Naive thymus-derived CD4-positive, alpha-beta T cell (primary cell): ENCODE measurements at regions of chr3 and their contacts with region 1.

Region 1: DNA sequence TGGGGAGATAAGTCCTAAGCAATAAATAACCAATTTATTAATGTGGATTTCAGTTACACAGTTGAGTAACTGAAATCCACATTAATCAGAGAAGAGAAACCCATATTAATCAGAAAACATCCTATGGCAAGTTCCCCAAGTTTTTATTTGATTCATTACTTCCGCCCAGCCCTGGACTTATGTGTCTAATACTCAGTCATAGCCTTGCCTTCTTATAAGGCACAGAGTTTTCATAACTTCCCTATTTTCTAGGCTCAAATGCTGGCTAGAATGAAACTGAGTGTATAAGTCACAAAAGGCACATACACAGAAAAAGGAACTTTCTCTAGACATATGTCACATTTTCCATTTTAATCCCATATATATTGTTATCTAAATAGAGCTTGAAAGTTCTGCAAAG is 28.8 kb downstream of the CD47 start:
- DNase-seq: no peak
- ATAC-seq: peak; percentile 79
- H3K4me3 ChIP-seq: no peak overlapping the region
- H3K4me3 Mint-ChIP-seq: no peak overlapping the region
- H3K27ac ChIP-seq: no peak overlapping the region
- H3K27ac Mint-ChIP-seq: peak overlapping the region in 6 of 9 donors; percentile 12 to 67 (median 38)
- H3K4me1 ChIP-seq: peaks cover 6 to 10% of the 10 kb centered on the region in 2 donors
- H3K4me1 Mint-ChIP-seq: peaks cover 38 to 89% (median 80%) of the 10 kb centered on the region in 7 donors
- H3K27me3 ChIP-seq: no peaks in the 10 kb centered on the region
- H3K27me3 Mint-ChIP-seq: no peaks in the 10 kb centered on the region

Region 2: GRCh38 chr3:108022256-108023097 is 39.6 kb before region 1 on chr3:
- CTCF ChIA-PET with region 1: no interaction called
- POLR2A ChIA-PET with region 1: no interaction called
- intact Hi-C with region 1: no loop called
- DNase-seq: no peak
- ATAC-seq: no peak
- H3K4me3 ChIP-seq: no peak overlapping the region
- H3K4me3 Mint-ChIP-seq: no peak overlapping the region
- H3K27ac ChIP-seq: no peak overlapping the region
- H3K27ac Mint-ChIP-seq: peak overlapping the region in 1 of 9 donors; percentile 42
- H3K4me1 ChIP-seq: no peaks in the 10 kb centered on the region
- H3K4me1 Mint-ChIP-seq: peaks cover 2 to 16% (median 8%) of the 10 kb centered on the region in 7 donors
- H3K27me3 ChIP-seq: no peaks in the 10 kb centered on the region
- H3K27me3 Mint-ChIP-seq: peaks cover 0 to 11% (median 9%) of the 10 kb centered on the region in 5 donors

Region 3: GRCh38 chr3:108047987-108048386 is 14.1 kb before region 1 on chr3:
- CTCF ChIA-PET with region 1: no interaction called
- POLR2A ChIA-PET with region 1: no interaction called
- intact Hi-C with region 1: loop called in 1 of 2 experiments (anchors 2 kb)
- DNase-seq: no peak
- ATAC-seq: no peak
- H3K4me3 ChIP-seq: no peak overlapping the region
- H3K4me3 Mint-ChIP-seq: no peak overlapping the region
- H3K27ac ChIP-seq: no peak overlapping the region
- H3K27ac Mint-ChIP-seq: peak overlapping the region in 7 of 9 donors; percentile 27 to 80 (median 64)
- H3K4me1 ChIP-seq: peaks cover 0 to 4% of the 10 kb centered on the region in 2 donors
- H3K4me1 Mint-ChIP-seq: peaks cover 14 to 51% (median 39%) of the 10 kb centered on the region in 7 donors
- H3K27me3 ChIP-seq: no peaks in the 10 kb centered on the region
- H3K27me3 Mint-ChIP-seq: no peaks in the 10 kb centered on the region